PC-3 (cell line): ENCODE measurements at regions of chr1 and their contacts with region 1.

Region 1: GRCh38 chr1:117605774-117606648 is at the start of gene TENT5C:
- DNase-seq: peak; percentile 99
- ATAC-seq: peak; percentile 82
- H3K4me3 ChIP-seq: peak within 1 kb of the TSS; percentile 97
- H3K27ac ChIP-seq: peak within 1 kb of the TSS; percentile 29
- H3K4me1 ChIP-seq: peaks cover 14% of the 10 kb centered on the region
- H3K27me3 ChIP-seq: no peaks in the 10 kb centered on the region
- CTCF ChIP-seq: no peak
- total RNA-seq, gene TENT5C: 2.2 and 2.4 TPM in 2 replicates

Region 2: GRCh38 chr1:117398957-117399356 is 207.1 kb before region 1 on chr1:
- CTCF ChIA-PET with region 1: no interaction called
- POLR2A ChIA-PET with region 1: no interaction called
- intact Hi-C with region 1: no loop called
- DNase-seq: no peak
- ATAC-seq: no peak
- H3K4me3 ChIP-seq: no peak overlapping the region
- H3K27ac ChIP-seq: no peak overlapping the region
- H3K4me1 ChIP-seq: no peaks in the 10 kb centered on the region
- H3K27me3 ChIP-seq: no peaks in the 10 kb centered on the region
- CTCF ChIP-seq: no peak

Region 3: DNA sequence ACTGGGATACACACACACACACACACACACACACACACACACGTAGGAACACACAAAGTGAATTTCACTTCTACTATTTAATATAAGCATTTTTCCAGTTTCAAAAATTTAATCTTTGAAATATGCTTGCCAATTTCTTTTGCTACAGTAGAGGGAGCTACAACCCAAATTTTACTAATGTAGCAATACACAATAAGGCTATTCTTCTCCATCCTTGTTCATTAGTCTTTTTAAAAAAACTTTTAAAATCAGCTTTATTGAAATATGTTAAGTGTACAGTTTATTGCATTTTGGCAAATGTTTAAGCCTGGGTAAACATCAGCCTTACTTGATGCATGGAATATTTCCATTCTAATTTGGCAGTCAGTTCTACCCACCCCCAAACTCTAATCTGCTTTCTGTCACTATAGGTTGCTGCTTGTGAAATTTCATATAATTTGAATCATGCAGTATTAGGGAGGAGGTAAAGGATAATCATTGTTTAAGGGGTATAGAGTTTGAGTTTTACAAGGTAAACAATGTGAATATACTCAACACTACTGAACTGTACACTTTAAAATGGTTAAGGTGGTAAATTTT is 93.2 kb before region 1 on chr1:
- CTCF ChIA-PET with region 1: no interaction called
- POLR2A ChIA-PET with region 1: no interaction called
- intact Hi-C with region 1: loop called (anchors 5 kb)
- DNase-seq: peak; percentile 63
- ATAC-seq: peak; percentile 69
- H3K4me3 ChIP-seq: no peak overlapping the region
- H3K27ac ChIP-seq: no peak overlapping the region
- H3K4me1 ChIP-seq: no peaks in the 10 kb centered on the region
- H3K27me3 ChIP-seq: no peaks in the 10 kb centered on the region
- CTCF ChIP-seq: peak; percentile 83

Region 4: GRCh38 chr1:117534995-117535467 is 71.0 kb before region 1 on chr1:
- CTCF ChIA-PET with region 1: no interaction called
- POLR2A ChIA-PET with region 1: no interaction called
- intact Hi-C with region 1: loop called (anchors 5 kb)
- DNase-seq: peak; percentile 83
- ATAC-seq: peak; percentile 82
- H3K4me3 ChIP-seq: no peak overlapping the region
- H3K27ac ChIP-seq: no peak overlapping the region
- H3K4me1 ChIP-seq: peaks cover 20% of the 10 kb centered on the region
- H3K27me3 ChIP-seq: no peaks in the 10 kb centered on the region
- CTCF ChIP-seq: peak; percentile 82

Region 5: DNA sequence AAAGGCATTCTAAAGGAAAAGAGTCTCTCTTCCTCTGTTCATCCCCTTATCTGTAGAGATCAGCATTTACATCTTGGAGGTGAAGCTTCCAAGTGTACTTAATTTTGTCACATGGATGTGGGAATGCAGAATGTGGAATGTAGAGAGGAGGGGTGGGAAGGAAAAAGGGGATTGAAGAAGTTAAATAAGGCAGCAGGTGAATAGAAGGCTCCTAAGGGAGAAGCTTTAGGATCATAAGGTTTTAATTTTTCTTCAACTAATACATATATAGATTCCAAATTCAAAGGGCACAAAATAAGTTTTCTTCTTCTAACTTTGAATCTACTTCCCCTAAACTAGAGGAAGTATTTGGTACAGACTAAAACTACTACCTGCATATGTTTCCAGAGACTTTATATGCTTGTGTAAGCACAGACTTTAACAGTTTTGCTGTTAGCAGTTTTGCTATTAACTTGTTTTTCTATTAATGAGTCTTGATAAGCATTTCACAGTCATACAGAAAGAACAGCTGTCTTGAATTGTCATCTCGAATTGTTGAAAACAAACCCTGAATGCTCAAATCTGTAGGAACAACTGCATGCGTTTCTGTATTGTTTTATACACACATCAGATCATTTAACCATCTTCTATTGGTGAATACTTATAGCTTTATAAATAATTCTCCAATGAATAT is 12.6 kb after region 1 on chr1:
- CTCF ChIA-PET with region 1: no interaction called
- POLR2A ChIA-PET with region 1: no interaction called
- intact Hi-C with region 1: no loop called
- DNase-seq: no peak
- ATAC-seq: no peak
- H3K4me3 ChIP-seq: no peak overlapping the region
- H3K27ac ChIP-seq: no peak overlapping the region
- H3K4me1 ChIP-seq: 0 out of 2 replicates have a peak, but pooled peaks cover 3% of the 10 kb centered on the region
- H3K27me3 ChIP-seq: no peaks in the 10 kb centered on the region
- CTCF ChIP-seq: no peak

Region 6: GRCh38 chr1:117644696-117645311 is 38.8 kb after region 1 on chr1:
- CTCF ChIA-PET with region 1: no interaction called
- POLR2A ChIA-PET with region 1: no interaction called
- intact Hi-C with region 1: no loop called
- DNase-seq: no peak
- ATAC-seq: no peak
- H3K4me3 ChIP-seq: no peak overlapping the region
- H3K27ac ChIP-seq: no peak overlapping the region
- H3K4me1 ChIP-seq: no peaks in the 10 kb centered on the region
- H3K27me3 ChIP-seq: no peaks in the 10 kb centered on the region
- CTCF ChIP-seq: no peak

Region 7: DNA sequence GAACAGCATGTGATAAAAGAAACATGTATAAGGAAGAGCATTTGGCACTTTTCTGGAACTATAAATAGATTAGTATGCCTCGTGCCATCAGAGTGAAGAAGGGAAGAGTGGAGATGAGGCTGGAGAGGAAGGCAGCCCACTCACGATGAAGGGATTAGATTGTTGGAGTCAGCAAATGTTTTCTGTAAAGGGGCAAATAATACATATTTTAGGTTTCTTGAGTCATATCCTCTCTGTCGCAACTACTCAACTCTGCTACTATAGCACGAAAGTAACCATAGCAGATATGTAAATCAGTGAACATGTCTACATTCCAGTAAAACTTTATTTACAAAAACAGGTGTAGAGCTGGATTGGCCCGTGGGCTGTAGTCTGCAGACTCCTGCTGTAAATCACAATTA is 147.6 kb after region 1 on chr1:
- CTCF ChIA-PET with region 1: interaction called, 3 read pairs
- POLR2A ChIA-PET with region 1: no interaction called
- intact Hi-C with region 1: loop called (anchors 1 kb)
- DNase-seq: peak; percentile 61
- ATAC-seq: peak; percentile 21
- H3K4me3 ChIP-seq: peak overlapping the region; percentile 59
- H3K27ac ChIP-seq: no peak overlapping the region
- H3K4me1 ChIP-seq: peaks cover 27% of the 10 kb centered on the region
- H3K27me3 ChIP-seq: no peaks in the 10 kb centered on the region
- CTCF ChIP-seq: no peak

Region 8: GRCh38 chr1:117929173-117929989 is 323.4 kb after region 1 on chr1 and contains the starts of genes GDAP2 and WDR3:
- CTCF ChIA-PET with region 1: interaction called, 3 read pairs
- POLR2A ChIA-PET with region 1: no interaction called
- intact Hi-C with region 1: loop called (anchors 10 kb)
- DNase-seq: peak; percentile 98
- ATAC-seq: peak; percentile 83
- H3K4me3 ChIP-seq: peak within 1 kb of the TSS; percentile 86
- H3K27ac ChIP-seq: peak within 1 kb of the TSS; percentile 31
- H3K4me1 ChIP-seq: peaks cover 53% of the 10 kb centered on the region
- H3K27me3 ChIP-seq: no peaks in the 10 kb centered on the region
- CTCF ChIP-seq: no peak
- total RNA-seq, gene GDAP2: 17.7 and 20.7 TPM in 2 replicates
- total RNA-seq, gene WDR3: 38.2 and 57.8 TPM in 2 replicates